Right cardiac atrium (tissue), 5 donors: ENCODE measurements at regions of chrX and their contacts with region 1.

Region 1: GRCh38 chrX:130994671-130995070 is 63.5 kb upstream of the ARHGAP36 start:
- DNase-seq: no peak
- ATAC-seq: no peak
- H3K4me3 ChIP-seq: no peak overlapping the region
- H3K27ac ChIP-seq: no peak overlapping the region
- H3K4me1 ChIP-seq: no peaks in the 10 kb centered on the region
- H3K27me3 ChIP-seq: no peaks in the 10 kb centered on the region

Region 2: DNA sequence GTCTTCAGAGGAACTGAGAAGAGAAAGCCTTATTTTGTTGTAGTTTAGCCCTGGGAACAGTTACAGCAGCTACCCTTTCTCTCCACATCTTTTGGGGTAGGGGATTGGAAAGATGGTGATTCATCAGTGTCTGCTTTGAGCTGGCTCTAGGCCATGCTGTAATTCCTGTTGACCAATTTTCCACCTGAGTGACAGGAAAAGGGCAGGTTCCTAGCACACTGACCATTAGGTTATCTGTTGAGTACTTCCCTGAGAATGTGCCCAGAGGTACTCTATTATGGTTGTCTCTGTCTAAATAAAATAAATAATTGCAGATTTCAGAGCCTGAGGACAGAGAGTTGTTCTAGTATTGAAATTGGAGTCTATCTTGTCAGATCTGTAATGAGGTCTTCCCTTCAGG is 200.7 kb before region 1 on chrX:
- intact Hi-C with region 1: no loop called
- DNase-seq: no peak
- ATAC-seq: no peak
- H3K4me3 ChIP-seq: no peak overlapping the region
- H3K27ac ChIP-seq: no peak overlapping the region
- H3K4me1 ChIP-seq: no peaks in the 10 kb centered on the region
- H3K27me3 ChIP-seq: no peaks in the 10 kb centered on the region

Region 3: GRCh38 chrX:131187206-131187605 is 192.5 kb after region 1 on chrX:
- intact Hi-C with region 1: no loop called
- DNase-seq: no peak
- ATAC-seq: no peak
- H3K4me3 ChIP-seq: no peak overlapping the region
- H3K27ac ChIP-seq: no peak overlapping the region
- H3K4me1 ChIP-seq: no peaks in the 10 kb centered on the region
- H3K27me3 ChIP-seq: no peaks in the 10 kb centered on the region

Region 4: DNA sequence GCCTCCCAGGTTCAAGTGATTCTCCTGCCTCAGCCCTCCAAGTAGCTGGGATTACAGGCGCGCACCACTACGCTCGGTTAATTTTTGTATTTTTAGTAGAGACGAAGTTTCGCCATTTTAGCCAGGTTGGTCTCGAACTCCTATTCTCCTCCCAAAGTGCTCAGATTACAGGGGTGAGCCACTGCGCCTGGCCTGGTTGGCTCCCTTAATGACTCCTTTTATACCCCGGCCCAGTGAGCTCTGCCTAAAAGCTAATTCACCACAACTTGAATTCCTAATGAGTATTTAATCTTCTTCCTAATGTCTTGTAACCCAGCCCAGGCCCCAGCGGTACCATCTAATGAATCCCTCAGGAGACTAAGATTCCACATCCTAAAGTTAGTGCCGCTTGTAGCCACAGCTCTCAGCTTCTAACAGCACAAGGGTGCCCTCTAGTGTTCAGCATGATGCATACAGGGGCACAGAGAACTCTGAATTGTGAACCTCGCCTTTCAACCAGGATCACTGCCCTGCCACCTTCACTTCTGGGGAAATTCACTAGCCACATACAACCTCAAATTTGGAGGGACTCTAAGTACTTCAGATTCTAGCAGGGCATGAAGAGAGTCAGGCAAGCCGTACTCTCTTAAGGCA is 638.7 kb after region 1 on chrX:
- intact Hi-C with region 1: loop called in 2 of 4 experiments (anchors 10 kb)
- DNase-seq: peak in 1 of 3 donors; percentile 31
- ATAC-seq: peak in 1 of 2 donors; percentile 74
- H3K4me3 ChIP-seq: no peak overlapping the region
- H3K27ac ChIP-seq: no peak overlapping the region
- H3K4me1 ChIP-seq: no peaks in the 10 kb centered on the region
- H3K27me3 ChIP-seq: no peaks in the 10 kb centered on the region